OCI-LY7 (cell line): ENCODE measurements at regions of chr4 and their contacts with region 1.

Region 1: GRCh38 chr4:39469429-39470077 is 10.7 kb downstream of the LIAS start:
- DNase-seq: peak; percentile 80
- H3K4me3 ChIP-seq: no peak overlapping the region
- H3K27ac ChIP-seq: no peak overlapping the region
- H3K4me1 ChIP-seq: peaks cover 12% of the 10 kb centered on the region
- CTCF ChIP-seq: peak; percentile 99

Region 2: DNA sequence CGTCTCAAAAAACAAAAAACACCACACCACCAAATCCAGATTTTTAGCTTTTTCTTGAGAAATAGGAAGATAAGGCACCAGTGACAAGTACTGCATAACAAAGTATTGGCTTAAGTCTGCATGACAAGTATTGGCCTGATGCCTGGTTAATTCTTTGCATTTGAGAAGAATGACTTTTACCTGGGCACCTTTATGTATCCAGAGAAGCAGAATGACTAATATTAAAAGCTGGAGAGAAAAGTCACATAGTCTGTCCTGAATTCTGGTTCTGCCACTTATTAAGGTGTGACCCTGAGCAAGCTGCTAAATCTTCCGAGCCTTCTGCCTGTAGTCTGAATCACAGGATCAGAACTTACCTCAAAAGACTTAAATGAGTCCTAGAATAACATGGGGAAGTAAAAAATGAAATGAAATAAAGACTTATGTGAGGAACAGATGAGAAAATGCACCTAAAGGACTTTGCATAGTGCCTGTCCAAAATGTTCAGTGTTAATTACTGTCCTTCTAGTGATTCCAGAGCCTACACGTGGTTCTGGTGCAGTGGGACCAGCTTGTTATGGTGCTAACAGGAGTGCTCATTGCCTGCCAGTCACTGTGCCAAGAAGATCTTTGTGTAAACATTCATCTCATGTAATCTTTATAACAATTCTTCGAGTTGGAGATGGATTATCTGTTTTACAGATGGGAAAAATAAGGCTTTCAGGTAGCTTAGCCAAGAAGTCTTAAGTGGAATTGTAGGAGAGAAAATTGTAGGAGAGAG is 26.1 kb after region 1 on chr4:
- CTCF ChIA-PET with region 1: no interaction called
- POLR2A ChIA-PET with region 1: no interaction called
- intact Hi-C with region 1: no loop called
- DNase-seq: no peak
- H3K4me3 ChIP-seq: no peak overlapping the region
- H3K27ac ChIP-seq: no peak overlapping the region
- H3K4me1 ChIP-seq: no peaks in the 10 kb centered on the region
- CTCF ChIP-seq: no peak

Region 3: DNA sequence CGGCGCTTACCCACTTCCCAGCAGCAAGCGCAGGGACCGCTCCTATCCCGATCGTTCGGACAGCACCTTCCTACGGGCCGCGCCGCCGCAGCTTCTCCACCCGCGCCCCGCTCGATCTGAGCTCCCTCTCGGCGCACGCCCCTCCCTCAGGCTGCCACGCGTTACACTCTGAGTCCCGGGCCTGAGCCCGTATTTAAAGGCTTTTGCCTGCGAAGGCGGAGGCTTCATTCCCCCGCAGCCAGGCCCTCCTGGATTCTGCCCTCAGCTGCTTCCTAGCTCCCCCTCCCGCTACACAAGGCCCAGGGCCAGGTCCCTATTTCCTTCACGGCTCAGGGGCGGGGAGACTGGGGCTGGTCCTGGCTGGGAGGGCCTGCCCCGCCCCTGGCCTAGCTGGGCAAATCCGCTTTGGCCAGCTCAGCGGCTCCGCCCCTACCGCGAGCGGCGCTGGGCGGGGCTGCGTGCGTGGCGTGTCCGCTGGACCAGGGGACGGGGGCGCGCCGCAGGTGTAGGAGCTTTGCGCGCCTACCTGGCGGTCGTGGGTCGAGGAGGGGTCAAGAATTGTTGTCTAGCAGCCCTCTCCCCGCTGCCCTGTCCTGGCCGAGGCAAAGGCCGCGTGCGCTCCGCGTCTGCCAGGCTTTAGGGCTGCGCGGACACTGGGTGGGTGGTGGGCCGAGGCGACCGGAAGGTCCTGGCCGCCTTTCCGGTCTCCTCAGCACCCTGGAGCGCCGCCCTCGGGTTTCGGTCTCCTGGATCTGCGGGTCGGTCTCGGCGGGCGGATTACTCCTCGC is 57.9 kb after region 1 on chr4 and contains the start of gene UGDH:
- CTCF ChIA-PET with region 1: no interaction called
- POLR2A ChIA-PET with region 1: interaction called, 5 read pairs
- intact Hi-C with region 1: loop called (anchors 5 kb)
- DNase-seq: peak; percentile 95
- H3K4me3 ChIP-seq: peak within 1 kb of the TSS; percentile 80
- H3K27ac ChIP-seq: no peak within 1 kb of the TSS
- H3K4me1 ChIP-seq: peaks cover 16% of the 10 kb centered on the region
- CTCF ChIP-seq: no peak; the same call in 1 of the 2 replicates
- total RNA-seq, gene UGDH: 8.1 and 9.8 TPM in 2 replicates

Region 4: DNA sequence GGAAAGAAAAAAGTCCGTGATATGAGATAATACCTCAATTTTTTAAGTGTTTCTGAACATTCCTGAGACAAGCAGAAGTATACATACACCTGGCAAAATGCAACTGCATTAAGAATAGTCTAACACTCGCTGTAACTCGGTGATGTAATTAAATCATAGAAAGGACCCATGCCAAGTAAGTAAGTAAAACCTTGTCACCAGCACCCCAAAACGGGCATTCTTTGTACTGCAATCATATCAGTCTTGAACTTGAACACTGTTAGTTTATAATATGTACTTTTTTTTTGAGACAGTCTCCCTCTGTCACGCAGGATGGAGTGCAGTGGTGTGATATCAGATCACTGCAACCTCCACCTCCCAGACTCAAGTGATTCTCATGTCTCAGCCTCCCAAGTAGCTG is 121.7 kb after region 1 on chr4:
- CTCF ChIA-PET with region 1: no interaction called
- POLR2A ChIA-PET with region 1: interaction called, 4 read pairs
- intact Hi-C with region 1: loop called (anchors 5 kb)
- DNase-seq: peak; percentile 49
- H3K4me3 ChIP-seq: no peak overlapping the region
- H3K27ac ChIP-seq: no peak overlapping the region
- H3K4me1 ChIP-seq: no peaks in the 10 kb centered on the region
- CTCF ChIP-seq: peak; percentile 65

Region 5: GRCh38 chr4:39638354-39639240 is 169.0 kb after region 1 on chr4 and contains the start of gene SMIM14:
- CTCF ChIA-PET with region 1: no interaction called
- POLR2A ChIA-PET with region 1: interaction called, 7 read pairs
- intact Hi-C with region 1: loop called (anchors 10 kb)
- DNase-seq: peak; percentile 41
- H3K4me3 ChIP-seq: peak within 1 kb of the TSS; percentile 68
- H3K27ac ChIP-seq: no peak within 1 kb of the TSS
- H3K4me1 ChIP-seq: peaks cover 22% of the 10 kb centered on the region
- CTCF ChIP-seq: no peak
- total RNA-seq, gene SMIM14: 0.03 TPM in 1 of 2 replicates, not detected in the other

Region 6: DNA sequence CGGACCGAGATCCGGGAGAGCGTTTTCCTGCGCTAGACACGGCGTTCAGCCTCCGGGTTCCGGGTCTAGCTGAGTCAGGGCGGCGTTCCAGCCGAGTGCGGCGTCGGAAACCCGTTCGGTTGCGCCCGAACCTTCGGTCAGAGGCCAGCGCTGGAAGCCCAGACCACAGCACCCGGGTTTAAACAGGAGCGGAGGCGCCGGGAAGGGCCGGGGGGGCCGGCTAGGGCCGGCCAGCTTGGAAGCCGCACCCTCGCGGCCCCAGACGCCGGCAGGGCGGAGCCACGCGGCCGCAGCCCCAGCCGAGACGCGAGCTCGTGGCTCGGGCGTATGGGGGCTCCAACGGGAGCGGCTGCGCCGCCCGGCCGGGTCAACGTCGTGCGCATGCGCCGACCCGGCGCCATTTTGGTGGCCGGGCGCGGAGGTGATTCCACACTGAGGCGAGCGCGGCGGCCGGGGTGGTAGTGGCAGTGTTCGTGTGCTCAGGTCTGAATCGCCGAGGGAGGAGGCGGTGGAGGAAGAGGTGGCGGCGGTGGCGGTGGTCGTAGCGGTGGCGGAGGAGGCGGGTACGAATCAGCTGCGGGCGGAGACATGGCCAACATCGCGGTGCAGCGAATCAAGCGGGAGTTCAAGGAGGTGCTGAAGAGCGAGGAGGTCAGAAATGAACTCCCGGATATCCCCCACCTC is 228.3 kb after region 1 on chr4 and contains the start of gene UBE2K:
- CTCF ChIA-PET with region 1: no interaction called
- POLR2A ChIA-PET with region 1: interaction called, 3 read pairs
- intact Hi-C with region 1: loop called (anchors 5 kb)
- DNase-seq: peak; percentile 93
- H3K4me3 ChIP-seq: peak within 1 kb of the TSS; percentile 98
- H3K27ac ChIP-seq: peak within 1 kb of the TSS; percentile 74
- H3K4me1 ChIP-seq: peaks cover 29% of the 10 kb centered on the region
- CTCF ChIP-seq: no peak
- total RNA-seq, gene UBE2K: 20.8 and 47.7 TPM in 2 replicates

Region 7: DNA sequence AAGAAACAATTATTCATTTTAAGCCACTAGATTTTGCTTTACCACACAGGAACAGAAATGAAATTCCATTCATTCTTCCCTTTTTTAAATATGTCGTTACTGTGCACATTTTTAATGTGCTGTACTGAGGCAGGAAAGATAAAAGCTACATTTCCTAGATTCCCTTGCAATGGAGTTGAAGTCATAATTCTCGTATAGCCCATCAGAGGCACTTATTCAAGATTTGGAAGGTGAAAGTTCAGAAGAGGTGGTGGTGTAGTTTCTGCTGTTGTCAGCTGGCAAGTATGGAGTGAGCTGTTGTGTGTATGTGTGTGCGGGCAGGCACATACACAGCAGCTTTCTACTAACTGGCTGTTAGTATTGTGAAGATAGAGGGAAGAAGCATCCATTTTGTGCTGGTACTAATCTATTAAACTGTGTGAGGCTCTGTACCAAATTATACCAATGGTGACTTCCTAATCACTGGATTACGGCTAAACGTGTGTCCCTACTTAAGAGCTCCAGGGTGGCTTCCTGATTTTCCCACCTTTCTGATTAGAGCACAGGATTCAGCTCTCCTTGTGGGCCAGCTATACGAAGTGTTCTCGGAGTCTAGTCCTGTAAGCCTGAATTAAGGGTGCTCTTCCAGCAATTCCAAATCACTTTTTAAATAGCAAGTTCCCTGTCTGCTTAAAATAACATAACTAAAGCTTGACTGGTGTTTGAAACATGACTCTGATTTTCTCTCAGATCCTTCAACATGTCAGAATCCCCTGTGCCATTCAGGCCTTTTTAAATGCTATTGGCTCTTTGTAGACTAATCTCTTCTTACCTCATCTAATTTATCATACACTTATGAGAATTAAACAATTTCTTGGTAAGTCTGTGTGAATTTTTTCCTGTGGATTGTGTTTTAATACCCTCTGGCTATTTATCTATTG is 464.4 kb after region 1 on chr4:
- CTCF ChIA-PET with region 1: no interaction called
- POLR2A ChIA-PET with region 1: interaction called, 10 read pairs
- intact Hi-C with region 1: no loop called
- DNase-seq: no peak
- H3K4me3 ChIP-seq: no peak overlapping the region
- H3K27ac ChIP-seq: no peak overlapping the region
- H3K4me1 ChIP-seq: peaks cover 39% of the 10 kb centered on the region
- CTCF ChIP-seq: no peak

Region 8: GRCh38 chr4:39977489-39978377 is 508.2 kb after region 1 on chr4 and contains the start of gene PDS5A:
- CTCF ChIA-PET with region 1: no interaction called
- POLR2A ChIA-PET with region 1: no interaction called
- intact Hi-C with region 1: loop called (anchors 1 kb)
- DNase-seq: peak; percentile 96
- H3K4me3 ChIP-seq: peak within 1 kb of the TSS; percentile 86
- H3K27ac ChIP-seq: peak within 1 kb of the TSS; percentile 86
- H3K4me1 ChIP-seq: peaks cover 25% of the 10 kb centered on the region
- CTCF ChIP-seq: peak; percentile 80
- total RNA-seq, gene PDS5A: 65.3 and 69.5 TPM in 2 replicates

Region 9: GRCh38 chr4:40409835-40410234 is 940.3 kb after region 1 on chr4:
- CTCF ChIA-PET with region 1: no interaction called
- POLR2A ChIA-PET with region 1: no interaction called
- intact Hi-C with region 1: no loop called
- DNase-seq: no peak
- H3K4me3 ChIP-seq: no peak overlapping the region
- H3K27ac ChIP-seq: no peak overlapping the region
- H3K4me1 ChIP-seq: no peaks in the 10 kb centered on the region
- CTCF ChIP-seq: no peak

Region 10: GRCh38 chr4:40473578-40474388 is 1004.2 kb after region 1 on chr4:
- CTCF ChIA-PET with region 1: no interaction called
- POLR2A ChIA-PET with region 1: no interaction called
- intact Hi-C with region 1: no loop called
- DNase-seq: no peak
- H3K4me3 ChIP-seq: no peak overlapping the region
- H3K27ac ChIP-seq: no peak overlapping the region
- H3K4me1 ChIP-seq: no peaks in the 10 kb centered on the region
- CTCF ChIP-seq: no peak